Panc1 (cell line): ENCODE measurements at regions of chr11 and their contacts with region 1.

Region 1: GRCh38 chr11:112570333-112570732 is 309.7 kb upstream of the PLET1 start:
- DNase-seq: no peak
- ATAC-seq: no peak
- H3K4me3 ChIP-seq: no peak overlapping the region
- H3K27ac ChIP-seq: no peak overlapping the region
- H3K4me1 ChIP-seq: no peaks in the 10 kb centered on the region
- H3K27me3 ChIP-seq: peaks cover 9% of the 10 kb centered on the region
- CTCF ChIP-seq: no peak

Region 2: DNA sequence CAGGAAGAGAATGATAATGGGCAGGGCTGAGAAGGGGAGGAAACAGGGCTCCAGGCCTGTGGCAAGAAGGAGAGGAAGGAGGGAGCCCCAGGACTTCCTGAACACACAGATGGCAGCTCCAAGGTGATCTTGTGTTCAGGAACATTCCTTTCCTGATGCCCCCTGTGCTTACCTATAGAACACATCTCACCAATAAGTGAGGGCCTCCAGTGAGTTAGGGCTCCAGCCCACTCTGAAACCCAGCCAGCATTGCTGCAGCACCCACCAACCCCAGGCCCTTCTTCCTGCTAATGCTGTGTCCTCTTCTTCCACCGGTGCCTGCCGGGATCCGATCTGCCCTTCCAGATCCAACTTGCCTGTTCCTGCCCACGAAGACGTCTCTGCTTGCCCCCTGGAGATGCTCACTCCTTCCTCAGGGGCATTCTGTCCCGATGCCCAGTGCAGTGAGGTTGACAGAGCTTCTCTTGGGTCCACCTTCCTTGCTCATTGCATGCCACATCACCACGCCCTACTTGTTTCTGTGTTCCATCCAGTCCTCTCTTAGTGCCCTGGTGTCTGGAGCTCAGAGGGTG is 834.6 kb after region 1 on chr11:
- CTCF ChIA-PET with region 1: no interaction called
- POLR2A ChIA-PET with region 1: no interaction called
- in situ Hi-C with region 1: no loop called
- intact Hi-C with region 1: loop called (anchors 5 kb)
- DNase-seq: no peak
- ATAC-seq: no peak
- H3K4me3 ChIP-seq: no peak overlapping the region
- H3K27ac ChIP-seq: no peak overlapping the region
- H3K4me1 ChIP-seq: no peaks in the 10 kb centered on the region
- H3K27me3 ChIP-seq: no peaks in the 10 kb centered on the region
- CTCF ChIP-seq: no peak